ENCODE measurements at regions of chr6 and their contacts with region 1.

Region 1: GRCh38 chr6:43496370-43497128 is 13.6 kb downstream of the LRRC73 start:
- H3K4me3 Mint-ChIP-seq: no peak overlapping the region
- H3K27ac Mint-ChIP-seq: peak overlapping the region; percentile 5
- H3K4me1 Mint-ChIP-seq: peaks cover 26% of the 10 kb centered on the region
- H3K27me3 Mint-ChIP-seq: no peaks in the 10 kb centered on the region

Region 2: DNA sequence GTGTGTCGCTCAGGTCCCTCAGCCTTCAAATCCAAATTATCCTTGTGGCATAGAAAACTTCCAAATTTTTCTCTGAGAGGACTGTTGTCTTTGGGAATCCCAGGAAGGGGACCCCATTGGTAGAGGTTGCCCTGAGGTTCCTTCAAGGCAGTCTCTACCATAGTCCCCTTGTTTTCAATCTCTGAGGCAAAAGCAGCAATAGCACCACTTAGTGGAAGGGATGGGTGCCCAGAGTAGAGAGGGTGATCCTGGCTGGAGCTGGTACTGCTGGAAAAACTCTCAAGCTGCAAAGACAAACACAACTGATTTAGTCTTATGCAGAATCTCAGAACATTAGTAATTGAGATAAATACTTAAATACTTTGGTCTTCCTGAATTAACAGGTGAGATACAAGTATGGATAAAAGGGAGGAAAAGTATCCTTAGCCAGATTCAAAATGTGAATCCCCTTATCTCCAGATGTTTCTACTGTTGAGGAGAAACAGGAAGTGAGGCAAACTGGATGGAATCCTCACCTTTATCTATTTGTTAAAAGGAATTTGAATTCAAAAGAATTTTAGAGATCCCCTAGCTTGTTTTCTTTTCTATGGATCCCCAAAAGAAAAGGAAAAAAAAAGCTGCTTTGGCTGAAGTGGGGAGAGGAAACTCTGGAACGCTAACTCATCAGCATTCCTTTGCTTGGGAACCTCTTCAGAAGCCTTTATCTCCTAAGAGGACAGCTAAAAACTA is 140.5 kb before region 1 on chr6:
- intact Hi-C with region 1: loop called (anchors 10 kb)
- H3K4me3 Mint-ChIP-seq: no peak overlapping the region
- H3K27ac Mint-ChIP-seq: no peak overlapping the region
- H3K4me1 Mint-ChIP-seq: no peaks in the 10 kb centered on the region
- H3K27me3 Mint-ChIP-seq: no peaks in the 10 kb centered on the region